PC-9 (cell line): ENCODE measurements at regions of chr3 and their contacts with region 1.

Region 1: DNA sequence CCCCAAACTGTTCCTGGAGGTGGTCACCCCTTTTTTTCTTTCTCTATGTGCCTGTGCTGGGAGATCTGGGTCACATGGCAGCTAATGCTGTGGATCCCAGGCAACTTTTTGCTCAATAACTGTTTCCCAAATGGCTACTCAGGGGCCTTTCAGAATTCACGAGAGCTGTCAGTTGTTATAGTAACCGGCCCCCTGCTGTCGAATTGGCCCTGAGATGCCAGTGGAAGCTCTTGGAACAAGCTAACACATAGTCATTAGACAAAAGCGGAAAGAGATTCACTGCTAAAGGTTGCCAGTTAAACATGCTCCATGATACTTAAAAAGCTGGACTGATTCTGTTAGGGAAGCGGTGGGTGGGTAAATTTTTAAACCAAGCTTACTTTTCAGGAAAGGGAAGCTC is 144.1 kb downstream of the FEZF2 start:
- DNase-seq: no peak
- H3K4me3 ChIP-seq: no peak overlapping the region
- H3K27ac ChIP-seq: no peak overlapping the region
- H3K4me1 ChIP-seq: no peaks in the 10 kb centered on the region
- H3K27me3 ChIP-seq: no peaks in the 10 kb centered on the region
- CTCF ChIP-seq: no peak

Region 2: DNA sequence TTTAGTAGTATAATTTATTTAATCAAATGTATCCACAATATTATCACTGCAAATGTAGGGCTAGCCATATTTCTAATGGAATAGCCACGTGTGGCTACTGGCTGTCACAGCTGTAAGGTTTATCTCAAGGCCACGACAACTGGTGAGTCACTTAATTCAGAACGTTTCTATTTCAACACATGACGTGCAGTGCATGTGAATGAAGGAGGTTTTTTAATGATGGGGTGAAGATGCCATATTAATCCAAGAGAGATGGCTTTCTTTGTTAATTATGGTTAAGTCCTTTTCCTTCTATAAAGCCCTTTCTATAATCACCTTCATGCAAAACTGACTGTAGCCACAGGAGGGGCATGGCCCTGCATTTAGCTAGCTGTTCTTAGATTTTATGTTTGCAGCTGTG is 67.8 kb before region 1 on chr3:
- CTCF ChIA-PET with region 1: no interaction called
- POLR2A ChIA-PET with region 1: interaction called, 23 read pairs
- intact Hi-C with region 1: no loop called
- DNase-seq: no peak
- H3K4me3 ChIP-seq: no peak overlapping the region
- H3K27ac ChIP-seq: no peak overlapping the region
- H3K4me1 ChIP-seq: no peaks in the 10 kb centered on the region
- H3K27me3 ChIP-seq: no peaks in the 10 kb centered on the region
- CTCF ChIP-seq: no peak

Region 3: GRCh38 chr3:62214850-62215249 is 14.4 kb before region 1 on chr3:
- CTCF ChIA-PET with region 1: no interaction called
- POLR2A ChIA-PET with region 1: no interaction called
- intact Hi-C with region 1: no loop called
- DNase-seq: no peak
- H3K4me3 ChIP-seq: no peak overlapping the region
- H3K27ac ChIP-seq: no peak overlapping the region
- H3K4me1 ChIP-seq: no peaks in the 10 kb centered on the region
- H3K27me3 ChIP-seq: no peaks in the 10 kb centered on the region
- CTCF ChIP-seq: no peak